Breast epithelium (tissue), 4 donors: ENCODE measurements at regions of chr2 and their contacts with region 1.

Region 1: GRCh38 chr2:192487636-192488035 is 292.9 kb upstream of the TMEFF2 start:
- DNase-seq: no peak
- H3K4me3 ChIP-seq: no peak overlapping the region
- H3K27ac ChIP-seq: no peak overlapping the region
- H3K4me1 ChIP-seq: no peaks in the 10 kb centered on the region
- H3K27me3 ChIP-seq: no peaks in the 10 kb centered on the region
- CTCF ChIP-seq: no peak
- POLR2A ChIP-seq: no peak

Region 2: GRCh38 chr2:192535956-192536685 is 48.5 kb after region 1 on chr2:
- intact Hi-C with region 1: loop called (anchors 2 kb)
- DNase-seq: no peak
- H3K4me3 ChIP-seq: no peak overlapping the region
- H3K27ac ChIP-seq: no peak overlapping the region
- H3K4me1 ChIP-seq: no peaks in the 10 kb centered on the region
- H3K27me3 ChIP-seq: no peaks in the 10 kb centered on the region
- CTCF ChIP-seq: no peak
- POLR2A ChIP-seq: no peak

Region 3: DNA sequence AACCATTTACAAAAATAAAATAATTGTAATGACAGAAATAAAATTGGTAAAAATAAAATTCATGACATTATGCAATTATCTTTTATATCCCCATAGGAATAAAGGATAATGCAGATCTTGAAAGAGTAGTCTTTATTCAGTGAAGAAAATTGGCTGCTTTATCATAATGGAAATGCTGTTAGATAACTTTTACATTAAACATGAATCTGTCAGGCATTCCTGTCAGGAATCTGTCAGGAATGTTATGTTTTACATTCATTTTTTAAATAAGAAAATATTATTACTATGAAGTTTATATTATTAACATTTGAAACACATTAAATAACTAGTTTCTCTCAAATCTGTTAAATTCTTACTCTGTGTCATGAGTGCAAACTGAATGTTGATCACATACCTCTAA is 731.8 kb after region 1 on chr2:
- intact Hi-C with region 1: no loop called
- DNase-seq: no peak
- H3K4me3 ChIP-seq: no peak overlapping the region
- H3K27ac ChIP-seq: no peak overlapping the region
- H3K4me1 ChIP-seq: no peaks in the 10 kb centered on the region
- H3K27me3 ChIP-seq: no peaks in the 10 kb centered on the region
- CTCF ChIP-seq: no peak
- POLR2A ChIP-seq: no peak